GM12878 (cell line): ENCODE measurements at regions of chr1 and their contacts with region 1.

Region 1: GRCh38 chr1:156480411-156481192 is 20.0 kb downstream of the MEF2D start:
- DNase-seq: no peak
- ATAC-seq: peak; percentile 89
- H3K4me3 ChIP-seq: no peak overlapping the region
- H3K27ac ChIP-seq: peak overlapping the region; percentile 75
- H3K4me1 ChIP-seq: peaks cover 37% of the 10 kb centered on the region
- H3K27me3 ChIP-seq: no peaks in the 10 kb centered on the region
- CTCF ChIP-seq: peak; percentile 66 to 85 (median 69)
- EP300 ChIP-seq: no peak
- POLR2A ChIP-seq: no peak; the same call in 1 of the 2 replicates
- RAD21 ChIP-seq: peak; percentile 59

Region 2: DNA sequence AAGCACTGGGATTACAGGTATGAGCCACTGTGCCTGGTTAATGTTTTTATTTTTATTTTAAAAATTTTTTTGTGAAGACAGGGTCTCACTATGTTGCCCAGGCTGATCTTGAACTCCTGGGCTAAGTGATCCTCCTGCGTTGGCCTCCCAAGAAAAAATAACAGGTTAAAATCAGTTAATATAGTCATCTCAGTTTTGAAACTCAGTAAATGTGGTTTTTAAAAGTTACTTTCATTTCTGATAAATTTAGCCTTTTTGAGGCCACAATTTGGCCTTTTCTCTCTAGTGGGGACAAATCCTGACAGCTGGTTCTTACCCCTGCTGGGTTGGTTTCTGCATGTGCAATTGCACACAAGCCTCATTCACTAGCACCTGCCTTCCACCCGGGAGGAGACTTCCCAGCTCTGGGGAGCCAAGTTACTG is 254.5 kb before region 1 on chr1:
- CTCF ChIA-PET with region 1: no interaction called
- POLR2A ChIA-PET with region 1: no interaction called
- RAD21 ChIA-PET with region 1: no interaction called
- SMC1A ChIA-PET with region 1: no interaction called
- in situ Hi-C with region 1: no loop called
- intact Hi-C with region 1: no loop called
- DNase-seq: peak; percentile 90
- ATAC-seq: peak; percentile 87
- H3K4me3 ChIP-seq: no peak overlapping the region
- H3K27ac ChIP-seq: peak overlapping the region; percentile 98
- H3K4me1 ChIP-seq: peaks cover 25% of the 10 kb centered on the region
- H3K27me3 ChIP-seq: no peaks in the 10 kb centered on the region
- CTCF ChIP-seq: no peak
- EP300 ChIP-seq: peak; percentile 79 to 92
- POLR2A ChIP-seq: no peak; the same call in 1 of the 2 replicates
- RAD21 ChIP-seq: no peak

Region 3: GRCh38 chr1:156295391-156295947 is 185.1 kb before region 1 on chr1 and contains the start of gene GLMP:
- CTCF ChIA-PET with region 1: no interaction called
- POLR2A ChIA-PET with region 1: no interaction called
- RAD21 ChIA-PET with region 1: no interaction called
- SMC1A ChIA-PET with region 1: no interaction called
- in situ Hi-C with region 1: no loop called
- intact Hi-C with region 1: no loop called
- DNase-seq: no peak
- ATAC-seq: peak; percentile 73
- H3K4me3 ChIP-seq: peak within 1 kb of the TSS; percentile 87
- H3K27ac ChIP-seq: no peak within 1 kb of the TSS
- H3K4me1 ChIP-seq: peaks cover 4% of the 10 kb centered on the region
- H3K27me3 ChIP-seq: no peaks in the 10 kb centered on the region
- CTCF ChIP-seq: no peak
- EP300 ChIP-seq: no peak
- POLR2A ChIP-seq: peak; percentile 65
- RAD21 ChIP-seq: no peak
- polyA plus RNA-seq, gene GLMP: 10.8 to 12.8 TPM

Region 4: DNA sequence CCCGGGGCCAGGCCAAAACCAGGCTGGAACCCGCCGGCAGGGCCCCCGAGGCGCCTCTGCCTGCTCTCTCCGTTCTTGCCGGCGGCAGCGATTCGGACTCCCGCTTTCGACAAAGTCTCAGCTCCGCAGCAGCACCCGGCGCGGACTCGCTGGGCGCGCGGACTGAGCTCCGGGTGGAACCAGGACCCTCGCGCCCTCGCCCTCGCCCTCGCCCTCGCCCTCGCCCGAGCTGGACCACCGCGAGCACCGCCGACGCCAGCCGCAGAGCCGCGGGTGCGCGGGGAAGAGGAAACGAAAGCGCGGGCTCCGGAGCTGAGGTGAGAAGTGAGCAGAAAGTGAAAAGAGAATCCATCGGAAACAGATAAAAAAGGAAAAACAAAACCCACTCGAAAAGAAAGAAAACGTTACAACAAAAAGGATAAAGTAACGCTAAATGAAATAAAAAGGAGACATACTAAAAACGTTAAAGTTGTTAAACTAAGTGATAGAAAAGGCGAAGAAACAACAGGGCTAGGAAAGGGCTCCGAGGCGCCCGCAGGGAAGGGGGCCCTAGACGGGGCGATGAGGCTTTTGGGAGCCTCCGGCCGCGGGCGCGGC is 45.0 kb before region 1 on chr1:
- CTCF ChIA-PET with region 1: no interaction called
- POLR2A ChIA-PET with region 1: no interaction called
- RAD21 ChIA-PET with region 1: no interaction called
- SMC1A ChIA-PET with region 1: no interaction called
- in situ Hi-C with region 1: no loop called
- intact Hi-C with region 1: no loop called
- DNase-seq: no peak
- ATAC-seq: no peak
- H3K4me3 ChIP-seq: peak overlapping the region; percentile 48; the same call in 1 of the 2 replicates
- H3K27ac ChIP-seq: no peak overlapping the region
- H3K4me1 ChIP-seq: no peaks in the 10 kb centered on the region; the same call in none of the 2 replicates
- H3K27me3 ChIP-seq: peaks cover 33 to 64% of the 10 kb centered on the region in 2 experiments
- CTCF ChIP-seq: no peak
- EP300 ChIP-seq: no peak
- POLR2A ChIP-seq: no peak
- RAD21 ChIP-seq: no peak

Region 5: DNA sequence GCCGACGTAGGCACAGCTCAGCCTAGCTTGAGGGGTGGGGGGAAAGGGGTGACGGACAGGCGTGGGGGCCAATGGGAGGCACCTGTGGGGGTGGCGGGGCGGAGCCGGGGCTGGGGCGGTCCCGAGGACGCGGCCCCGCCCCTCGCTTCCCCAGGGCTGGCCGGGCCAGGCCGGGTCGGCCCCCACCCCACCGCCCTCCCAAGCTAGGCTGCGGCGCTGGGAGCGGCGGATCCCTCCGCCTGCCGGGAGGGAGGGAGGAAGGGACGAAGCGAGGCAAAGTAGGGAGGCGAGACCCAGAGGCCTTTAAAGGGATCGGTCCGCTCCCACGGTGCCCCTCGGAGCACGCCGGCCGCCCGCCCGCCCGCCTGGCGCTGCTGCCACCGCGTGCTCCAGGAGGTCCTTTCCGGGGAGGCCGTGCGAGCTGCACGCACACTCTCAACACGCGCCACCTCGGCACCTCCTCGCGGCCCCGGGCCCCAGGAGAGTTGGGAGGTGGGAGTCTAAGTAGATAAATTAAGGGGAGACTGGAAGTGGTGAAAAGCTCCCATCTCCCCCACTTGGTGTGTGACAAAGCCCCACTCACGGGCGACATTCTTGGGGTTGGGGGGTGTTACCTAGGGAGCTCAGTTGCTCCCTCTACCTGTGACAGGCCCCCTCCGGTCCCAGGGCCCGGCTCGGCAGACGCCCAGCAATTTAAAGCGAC is 20.3 kb after region 1 on chr1:
- CTCF ChIA-PET with region 1: interaction called, 140 read pairs
- POLR2A ChIA-PET with region 1: interaction called, 630 read pairs
- RAD21 ChIA-PET with region 1: interaction called, 323 read pairs
- SMC1A ChIA-PET with region 1: interaction called, 460 read pairs
- in situ Hi-C with region 1: no loop called
- intact Hi-C with region 1: loop called (anchors 2 kb)
- DNase-seq: no peak
- ATAC-seq: peak; percentile 74
- H3K4me3 ChIP-seq: peak overlapping the region; percentile 92
- H3K27ac ChIP-seq: peak overlapping the region; percentile 97
- H3K4me1 ChIP-seq: peaks cover 52% of the 10 kb centered on the region
- H3K27me3 ChIP-seq: no peaks in the 10 kb centered on the region
- CTCF ChIP-seq: peak; percentile 57 to 71 (median 65)
- EP300 ChIP-seq: peak; percentile 4 to 68; a peak in 3 of 4 replicates
- POLR2A ChIP-seq: peak; percentile 88
- RAD21 ChIP-seq: peak; percentile 43

Region 6: GRCh38 chr1:156524481-156524869 is 43.9 kb after region 1 on chr1:
- CTCF ChIA-PET with region 1: interaction called, 17 read pairs
- POLR2A ChIA-PET with region 1: interaction called, 4 read pairs
- RAD21 ChIA-PET with region 1: interaction called, 17 read pairs
- SMC1A ChIA-PET with region 1: interaction called, 10 read pairs
- in situ Hi-C with region 1: no loop called
- intact Hi-C with region 1: no loop called
- DNase-seq: no peak
- ATAC-seq: peak; percentile 69
- H3K4me3 ChIP-seq: peak overlapping the region; percentile 54; the same call in 1 of the 2 replicates
- H3K27ac ChIP-seq: peak overlapping the region; percentile 76
- H3K4me1 ChIP-seq: peaks cover 24% of the 10 kb centered on the region
- H3K27me3 ChIP-seq: no peaks in the 10 kb centered on the region
- CTCF ChIP-seq: no peak
- EP300 ChIP-seq: no peak
- POLR2A ChIP-seq: no peak
- RAD21 ChIP-seq: no peak

Region 7: DNA sequence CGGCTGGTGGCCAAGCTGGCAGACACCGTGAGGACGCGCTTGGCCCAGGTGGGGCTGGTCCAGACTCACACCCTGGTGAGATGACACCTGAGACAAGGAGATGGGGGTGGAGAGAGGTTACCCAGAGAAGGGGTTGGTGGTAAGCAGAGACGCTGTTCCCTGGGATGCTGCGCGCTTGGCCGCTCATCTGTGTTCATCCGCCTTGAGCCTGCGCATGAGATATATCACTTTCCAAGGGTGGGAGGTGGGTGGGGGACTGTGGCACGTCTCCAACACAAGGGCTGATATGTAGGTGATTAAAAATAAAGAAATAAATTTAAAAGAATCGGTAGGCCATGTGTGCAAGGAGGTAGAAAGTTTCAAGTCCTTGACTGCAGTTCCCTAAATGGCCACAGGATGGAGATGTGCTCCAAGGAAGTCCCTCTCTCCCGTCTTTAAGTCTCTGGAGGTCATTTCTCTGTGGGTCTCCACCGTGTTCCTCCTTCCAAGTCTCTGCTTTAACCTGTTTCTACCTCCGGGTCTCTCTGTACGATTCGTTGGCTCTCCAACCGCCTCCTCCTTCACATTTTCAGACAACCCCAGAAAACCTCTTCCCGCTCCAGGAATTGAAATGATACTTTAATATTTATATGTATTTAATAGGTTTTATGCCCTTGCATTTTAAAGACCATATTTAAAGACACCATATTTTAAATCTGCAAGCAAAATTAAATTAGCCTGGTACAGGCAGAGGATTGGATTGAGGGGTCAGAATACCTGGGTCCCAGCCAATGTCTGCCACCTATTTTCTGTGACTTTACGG is 103.4 kb after region 1 on chr1:
- CTCF ChIA-PET with region 1: interaction called, 25 read pairs
- POLR2A ChIA-PET with region 1: interaction called, 4 read pairs
- RAD21 ChIA-PET with region 1: interaction called, 9 read pairs
- SMC1A ChIA-PET with region 1: interaction called, 7 read pairs
- in situ Hi-C with region 1: no loop called
- intact Hi-C with region 1: no loop called
- DNase-seq: no peak
- ATAC-seq: peak; percentile 83
- H3K4me3 ChIP-seq: no peak overlapping the region
- H3K27ac ChIP-seq: no peak overlapping the region
- H3K4me1 ChIP-seq: peaks cover 16% of the 10 kb centered on the region
- H3K27me3 ChIP-seq: no peaks in the 10 kb centered on the region; a peak in 1 of 4 replicates
- CTCF ChIP-seq: peak; percentile 88 to 93 (median 89)
- EP300 ChIP-seq: no peak
- POLR2A ChIP-seq: no peak
- RAD21 ChIP-seq: peak; percentile 87

Region 8: DNA sequence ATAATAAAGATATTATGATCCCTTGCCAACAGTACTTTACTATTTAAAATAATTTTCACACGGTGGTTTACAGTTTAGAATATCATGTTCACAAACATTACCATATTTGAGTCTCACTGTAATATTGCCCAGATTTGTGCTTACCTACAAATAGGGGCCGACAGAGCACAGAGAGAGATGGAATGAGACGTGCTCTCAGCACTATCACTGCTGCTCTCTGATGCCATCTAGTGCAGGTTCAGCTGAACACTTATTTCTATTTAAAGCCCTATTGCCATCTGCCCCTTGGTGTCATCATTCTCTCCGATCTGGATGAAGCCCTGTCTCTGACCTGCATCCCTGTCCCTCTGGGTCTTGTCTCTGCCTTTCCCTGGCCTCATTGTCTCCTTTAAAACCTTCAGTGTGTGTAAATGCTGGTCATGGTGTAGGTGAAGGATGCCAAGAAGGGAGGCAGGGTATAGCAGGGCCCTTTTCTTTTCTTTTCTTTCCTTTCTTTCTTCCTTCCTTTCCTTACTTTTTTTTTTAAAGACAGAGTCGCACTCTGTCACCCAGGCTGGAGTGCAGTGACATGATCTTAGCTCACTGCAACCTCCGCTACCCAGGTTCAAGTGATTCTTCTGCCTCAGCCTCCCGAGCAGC is 127.6 kb after region 1 on chr1:
- CTCF ChIA-PET with region 1: interaction called, 22 read pairs
- POLR2A ChIA-PET with region 1: interaction called, 3 read pairs
- RAD21 ChIA-PET with region 1: interaction called, 3 read pairs
- SMC1A ChIA-PET with region 1: interaction called, 4 read pairs
- in situ Hi-C with region 1: no loop called
- intact Hi-C with region 1: loop called (anchors 10 kb)
- DNase-seq: peak; percentile 62
- ATAC-seq: peak; percentile 99
- H3K4me3 ChIP-seq: no peak overlapping the region
- H3K27ac ChIP-seq: no peak overlapping the region
- H3K4me1 ChIP-seq: 0 out of 2 replicates have a peak, but pooled peaks cover 4% of the 10 kb centered on the region
- H3K27me3 ChIP-seq: peaks cover 0 to 3% of the 10 kb centered on the region in 2 experiments; a peak in 2 of 4 replicates
- CTCF ChIP-seq: peak; percentile 75 to 93 (median 78)
- EP300 ChIP-seq: no peak
- POLR2A ChIP-seq: no peak
- RAD21 ChIP-seq: peak; percentile 80

Region 9: GRCh38 chr1:157403203-157403602 is 922.6 kb after region 1 on chr1:
- CTCF ChIA-PET with region 1: no interaction called
- POLR2A ChIA-PET with region 1: no interaction called
- RAD21 ChIA-PET with region 1: no interaction called
- SMC1A ChIA-PET with region 1: no interaction called
- in situ Hi-C with region 1: no loop called
- intact Hi-C with region 1: no loop called
- DNase-seq: no peak
- ATAC-seq: peak; percentile 89
- H3K4me3 ChIP-seq: no peak overlapping the region
- H3K27ac ChIP-seq: no peak overlapping the region
- H3K4me1 ChIP-seq: peaks cover 27% of the 10 kb centered on the region
- H3K27me3 ChIP-seq: no peaks in the 10 kb centered on the region; a peak in 1 of 4 replicates
- CTCF ChIP-seq: no peak
- EP300 ChIP-seq: peak; percentile 39 to 65; a peak in 2 of 4 replicates
- POLR2A ChIP-seq: no peak
- RAD21 ChIP-seq: no peak